Heart right ventricle (tissue), 16 donors: ENCODE measurements at regions of chr11 and their contacts with region 1.

Region 1: DNA sequence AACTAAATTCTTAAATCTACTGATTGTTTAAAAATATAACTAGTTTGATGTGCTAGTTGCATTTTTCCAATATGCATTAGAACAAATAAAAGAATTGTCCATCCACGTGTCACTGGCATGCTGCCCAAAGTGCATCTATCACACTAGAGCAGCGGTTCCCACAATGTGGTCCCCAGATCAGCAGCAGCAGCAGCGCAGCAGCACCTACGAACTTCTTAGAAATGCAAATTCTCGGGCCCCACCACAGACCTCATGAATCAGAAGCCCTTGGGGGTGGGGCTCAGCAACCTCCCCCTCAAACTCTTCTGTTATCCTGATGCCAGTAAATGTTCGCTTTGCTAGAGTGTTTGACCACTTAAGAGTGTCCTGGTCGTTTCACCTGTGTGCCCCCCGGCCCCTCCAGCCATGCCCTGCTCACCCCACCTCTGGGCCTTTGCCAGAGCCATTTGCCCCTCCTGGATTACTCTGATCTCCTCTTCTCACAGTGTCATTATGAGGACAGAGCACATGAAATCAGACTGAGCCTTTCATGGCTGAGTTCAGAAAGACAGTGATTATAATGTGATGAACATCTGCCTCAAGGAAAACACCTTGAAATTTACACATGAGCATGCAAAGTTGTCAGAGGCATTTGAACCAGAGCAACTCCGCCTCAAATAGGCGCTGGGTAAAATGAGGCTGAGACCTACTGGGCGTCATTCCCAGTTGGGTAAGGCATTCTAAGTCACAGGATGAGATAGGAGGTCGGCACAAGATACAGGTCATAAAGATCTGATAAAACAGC is 12.6 kb upstream of the VSIG10L2 start:
- DNase-seq: no peak
- ATAC-seq: no peak
- H3K4me3 ChIP-seq: no peak overlapping the region
- H3K27ac ChIP-seq: no peak overlapping the region
- H3K4me1 ChIP-seq: no peaks in the 10 kb centered on the region
- H3K27me3 ChIP-seq: peaks cover 0 to 18% (median 0%) of the 10 kb centered on the region in 7 donors
- CTCF ChIP-seq: no peak

Region 2: GRCh38 chr11:126039485-126040271 is 106.5 kb after region 1 on chr11:
- intact Hi-C with region 1: no loop called
- DNase-seq: no peak
- ATAC-seq: no peak
- H3K4me3 ChIP-seq: no peak overlapping the region
- H3K27ac ChIP-seq: no peak overlapping the region
- H3K4me1 ChIP-seq: peaks cover 0 to 11% (median 1%) of the 10 kb centered on the region in 9 donors
- H3K27me3 ChIP-seq: no peaks in the 10 kb centered on the region
- CTCF ChIP-seq: no peak

Region 3: GRCh38 chr11:126186708-126187529 is 253.7 kb after region 1 on chr11:
- intact Hi-C with region 1: loop called in 2 of 10 experiments (anchors 5 kb)
- DNase-seq: no peak
- ATAC-seq: peak in 5 of 8 donors; percentile 2 to 21 (median 11)
- H3K4me3 ChIP-seq: no peak overlapping the region
- H3K27ac ChIP-seq: no peak overlapping the region
- H3K4me1 ChIP-seq: no peaks in the 10 kb centered on the region
- H3K27me3 ChIP-seq: no peaks in the 10 kb centered on the region
- CTCF ChIP-seq: peak in 1 of 9 donors; percentile 10